ENCODE measurements at regions of chr4 and their contacts with region 1.

Region 1: GRCh38 chr4:152843481-152844090 is 63.8 kb downstream of the ARFIP1 start:
- DNase-seq: no peak
- CTCF ChIP-seq: no peak

Region 2: GRCh38 chr4:153083447-153083947 is 239.9 kb after region 1 on chr4:
- in situ Hi-C with region 1: loop called (anchors 25 kb)
- DNase-seq: peak; percentile 65
- CTCF ChIP-seq: peak; percentile 64

Region 3: GRCh38 chr4:153257151-153257620 is 413.6 kb after region 1 on chr4:
- in situ Hi-C with region 1: no loop called
- DNase-seq: no peak
- CTCF ChIP-seq: no peak

Region 4: DNA sequence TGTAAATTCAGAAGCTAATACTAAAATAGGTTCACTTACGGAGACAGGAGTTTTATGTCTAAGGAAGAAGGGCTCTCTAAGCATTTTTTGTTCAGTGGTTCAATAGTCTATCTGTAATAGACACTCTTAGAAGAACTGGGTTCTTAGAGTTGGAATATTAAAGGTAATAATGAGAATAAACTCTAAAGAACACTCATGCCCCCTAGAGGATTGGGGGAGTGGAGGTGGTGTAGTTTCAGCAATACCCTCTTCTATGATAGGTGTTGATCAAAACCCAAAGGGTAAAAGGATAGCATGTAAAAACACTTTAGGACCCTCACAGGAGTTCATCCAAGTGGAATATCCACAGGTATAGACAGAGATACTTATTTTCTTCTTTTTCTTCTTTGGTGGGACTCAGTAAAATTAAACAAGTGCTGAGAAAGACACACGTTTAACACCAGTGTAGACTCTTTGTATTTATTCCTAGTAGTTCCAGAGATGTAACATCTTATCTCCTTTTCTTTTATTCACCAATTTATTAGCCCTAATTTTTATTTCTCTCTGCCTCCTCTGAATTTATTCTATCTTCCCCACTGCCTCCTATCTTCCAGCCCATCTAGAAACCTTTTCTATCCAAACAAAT is 475.2 kb after region 1 on chr4:
- in situ Hi-C with region 1: loop called (anchors 25 kb)
- DNase-seq: peak; percentile 58
- CTCF ChIP-seq: peak; percentile 62